Left colon (tissue), 2 donors: ENCODE measurements at regions of chr11 and their contacts with region 1.

Region 1: DNA sequence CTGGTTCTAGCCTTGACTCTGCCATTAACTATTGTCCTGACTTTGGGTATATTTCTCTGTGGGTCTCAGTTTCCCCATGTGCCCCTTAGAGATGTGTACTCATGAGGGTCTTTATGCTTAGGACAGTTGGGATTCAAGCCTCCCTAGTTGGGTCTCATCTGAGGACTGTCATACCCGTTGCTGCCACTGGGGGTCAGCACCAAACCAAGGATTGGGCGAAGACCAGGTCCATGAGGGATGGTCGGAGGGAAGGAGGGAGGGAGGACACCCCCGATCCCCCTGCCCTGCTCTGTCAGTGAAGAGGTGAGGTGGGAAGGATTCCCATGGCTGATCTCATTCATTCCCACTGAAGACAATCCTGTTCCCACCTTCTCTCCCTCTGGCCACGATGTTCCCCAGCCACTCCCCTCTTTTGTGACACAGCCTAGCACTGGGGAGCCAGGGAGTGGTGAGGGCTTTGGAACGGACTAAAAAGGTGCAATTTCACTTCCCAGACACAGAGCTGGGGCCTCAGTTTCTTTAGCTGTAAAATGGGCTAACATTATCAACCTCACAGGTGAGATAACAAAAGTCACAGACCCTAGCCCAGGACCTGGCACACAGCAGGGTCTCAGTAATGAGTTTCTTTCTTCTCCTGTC is 12.4 kb upstream of the KLHL35 start:
- DNase-seq: peak in 1 of 2 donors; percentile 81
- ATAC-seq: peak; percentile 81

Region 2: GRCh38 chr11:75328426-75329277 is 116.8 kb before region 1 on chr11:
- intact Hi-C with region 1: no loop called
- DNase-seq: peak; percentile 84 to 85
- ATAC-seq: peak; percentile 70

Region 3: DNA sequence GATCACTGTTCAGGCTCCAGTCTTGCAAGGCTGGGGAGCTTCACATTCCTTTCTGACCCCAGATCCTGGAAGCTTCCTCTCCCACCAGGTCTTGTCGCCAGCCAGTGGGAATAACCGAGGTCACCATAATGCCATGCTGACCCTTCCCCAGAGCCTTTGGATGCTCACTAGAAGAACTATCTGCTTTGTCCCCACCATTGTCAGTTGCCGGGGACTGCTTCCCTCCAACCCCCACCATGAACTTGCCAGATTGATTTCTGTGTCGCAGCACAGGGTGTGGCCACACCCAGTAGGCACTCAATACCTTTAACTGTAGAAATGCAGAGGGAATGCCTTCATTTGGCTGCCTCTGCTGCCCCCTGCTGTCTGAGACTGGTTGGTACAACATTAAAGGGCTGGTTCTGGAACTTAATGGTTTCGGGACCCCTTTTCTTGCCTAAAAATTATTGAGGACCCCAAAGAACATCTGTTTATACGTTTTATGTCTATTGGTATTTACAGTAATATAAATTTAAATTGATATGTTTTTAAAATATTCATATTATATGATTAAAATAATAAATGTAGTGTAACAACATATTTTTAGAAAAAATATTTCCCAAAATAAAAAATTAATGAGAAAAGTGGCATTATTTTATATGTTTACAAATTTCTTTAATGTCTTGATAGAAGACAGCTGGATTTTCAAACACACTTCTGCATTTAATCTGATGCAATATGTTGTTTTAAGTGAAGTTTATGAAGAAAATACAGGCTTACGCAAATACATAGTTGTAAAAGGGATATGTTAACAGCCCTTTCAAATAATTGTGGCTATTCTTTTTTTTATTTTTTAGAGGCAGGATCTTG is 87.0 kb after region 1 on chr11:
- intact Hi-C with region 1: loop called (anchors 5 kb)
- DNase-seq: peak; percentile 51 to 77
- ATAC-seq: peak; percentile 64